ENCODE measurements at regions of chr18 and their contacts with region 1.

Region 1: DNA sequence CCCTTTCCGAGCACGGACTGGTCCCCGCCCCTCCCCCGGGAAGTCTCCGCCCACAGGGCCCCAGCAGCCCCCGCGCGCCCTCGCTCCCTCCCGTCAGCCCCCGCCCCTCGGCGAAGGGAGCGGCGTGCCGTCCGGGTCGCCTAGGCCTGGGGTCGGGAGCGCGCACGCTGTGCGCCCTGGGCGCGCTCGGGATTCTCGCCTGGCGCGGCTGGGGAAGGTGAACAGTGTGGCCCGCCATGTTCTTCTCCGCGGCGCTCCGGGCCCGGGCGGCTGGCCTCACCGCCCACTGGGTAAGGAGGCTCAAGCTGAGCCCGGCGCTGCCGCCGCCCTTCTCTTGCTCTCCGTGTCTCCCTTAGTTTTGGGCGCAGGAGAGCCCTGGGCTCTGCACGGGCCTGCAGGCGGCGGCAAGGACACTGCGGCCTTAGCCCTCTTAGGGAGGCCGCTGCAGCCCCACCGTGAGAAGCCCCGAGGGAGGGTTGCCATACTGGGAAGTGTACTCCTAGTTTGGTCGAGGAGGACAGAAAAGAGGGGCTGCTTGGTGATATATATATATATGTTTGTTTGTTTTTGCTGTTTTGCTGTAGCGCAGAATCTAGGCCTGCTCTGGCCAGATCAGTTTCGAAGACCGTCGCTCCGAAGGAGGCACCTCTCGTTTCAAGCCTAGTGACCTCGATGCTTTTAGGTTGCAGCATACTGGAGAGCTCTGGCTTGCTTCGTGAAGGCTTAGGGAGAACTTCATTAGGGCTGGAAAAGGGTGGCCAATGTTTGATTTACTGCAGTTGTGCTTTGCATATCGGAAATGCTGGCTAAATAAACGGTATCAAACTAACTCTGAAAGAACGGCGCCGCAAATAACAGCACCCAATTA is at the start of gene NDUFV2:
- DNase-seq: peak; percentile 98 to 99
- ATAC-seq: peak; percentile 97 to 99 (median 98)
- H3K4me3 ChIP-seq: peak within 1 kb of the TSS; percentile 93
- H3K27ac ChIP-seq: peak within 1 kb of the TSS; percentile 93
- H3K4me1 ChIP-seq: peaks cover 44% of the 10 kb centered on the region
- H3K27me3 ChIP-seq: no peaks in the 10 kb centered on the region
- CTCF ChIP-seq: no peak
- total RNA-seq, gene NDUFV2: 312 to 467 (median 328) TPM

Region 2: GRCh38 chr18:9066817-9067306 is 35.9 kb before region 1 on chr18:
- intact Hi-C with region 1: loop called in 1 of 2 experiments (anchors 2 kb)
- DNase-seq: no peak
- ATAC-seq: no peak
- H3K4me3 ChIP-seq: no peak overlapping the region
- H3K27ac ChIP-seq: no peak overlapping the region
- H3K4me1 ChIP-seq: peaks cover 12% of the 10 kb centered on the region
- H3K27me3 ChIP-seq: no peaks in the 10 kb centered on the region
- CTCF ChIP-seq: no peak

Region 3: DNA sequence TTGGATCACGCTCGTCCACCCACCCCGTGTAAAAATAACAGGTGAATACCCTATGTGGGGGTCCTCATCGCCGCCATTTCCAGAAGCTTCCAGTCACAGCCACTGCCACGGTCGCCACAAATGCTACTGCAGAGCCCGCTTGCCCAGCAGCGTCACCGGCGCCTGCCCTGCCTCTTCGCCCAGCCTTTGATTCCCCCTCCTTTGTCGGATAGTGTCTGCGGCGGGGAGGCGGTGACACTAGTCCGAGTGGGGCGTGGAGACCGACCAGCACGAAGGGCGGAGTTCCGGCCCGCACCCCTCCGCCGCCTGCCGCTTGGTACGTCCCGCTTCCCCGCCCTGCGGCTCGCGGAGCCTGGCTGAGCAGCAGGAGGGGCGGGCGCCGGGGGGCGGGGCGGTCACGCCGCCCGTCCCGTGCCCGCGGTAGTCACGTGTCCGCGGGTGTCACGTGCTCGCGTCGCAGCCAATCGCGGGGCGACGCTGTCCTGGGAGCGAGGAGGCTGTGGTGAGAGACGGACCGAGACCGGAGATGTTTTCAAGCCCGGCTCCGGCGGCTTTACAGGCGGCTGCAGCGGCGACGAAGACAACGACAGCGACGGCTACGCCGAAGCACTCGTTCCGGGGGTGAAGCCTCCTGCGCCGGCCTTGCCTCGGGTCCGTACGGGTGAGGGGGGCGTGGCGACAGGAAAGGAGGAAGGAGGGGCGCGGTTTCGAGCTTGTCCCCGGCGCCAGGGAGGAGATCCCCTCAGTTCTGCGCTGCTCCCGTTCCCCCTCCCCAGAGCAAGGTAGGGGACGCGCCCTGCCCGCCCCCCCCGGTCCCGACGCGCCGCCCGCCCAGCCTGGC is 33.8 kb after region 1 on chr18 and contains the start of gene ANKRD12:
- intact Hi-C with region 1: loop called (anchors 2 kb)
- DNase-seq: peak; percentile 97 to 99
- ATAC-seq: peak; percentile 91 to 96 (median 94)
- H3K4me3 ChIP-seq: peak within 1 kb of the TSS; percentile 88
- H3K27ac ChIP-seq: peak within 1 kb of the TSS; percentile 99
- H3K4me1 ChIP-seq: peaks cover 45% of the 10 kb centered on the region
- H3K27me3 ChIP-seq: no peaks in the 10 kb centered on the region
- CTCF ChIP-seq: no peak
- total RNA-seq, gene ANKRD12: 36.7 to 49.0 (median 44.4) TPM

Region 4: DNA sequence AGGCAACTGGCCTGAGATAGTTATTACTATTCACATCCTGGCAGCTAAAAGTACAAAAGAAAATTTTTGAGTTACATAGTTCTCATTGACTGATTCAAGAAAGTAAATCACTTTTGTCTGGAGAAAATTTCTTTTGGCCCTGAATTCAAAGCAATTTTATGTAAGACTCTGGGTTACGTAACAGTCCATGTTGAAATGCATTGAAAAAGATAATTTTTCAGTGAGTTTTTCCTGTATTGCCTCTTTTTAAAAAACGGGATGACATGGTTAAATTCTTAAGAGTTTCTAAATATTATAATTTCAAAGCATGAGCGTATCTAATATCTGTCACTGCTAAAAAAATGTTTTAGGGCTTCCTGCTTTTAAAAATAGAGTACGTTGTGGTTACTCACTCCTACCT is 106.5 kb after region 1 on chr18:
- intact Hi-C with region 1: no loop called
- DNase-seq: no peak
- ATAC-seq: no peak
- H3K4me3 ChIP-seq: no peak overlapping the region
- H3K27ac ChIP-seq: no peak overlapping the region
- H3K4me1 ChIP-seq: peaks cover 3% of the 10 kb centered on the region
- H3K27me3 ChIP-seq: no peaks in the 10 kb centered on the region
- CTCF ChIP-seq: no peak